ENCODE measurements at regions of chr6 and their contacts with region 1.

Region 1: DNA sequence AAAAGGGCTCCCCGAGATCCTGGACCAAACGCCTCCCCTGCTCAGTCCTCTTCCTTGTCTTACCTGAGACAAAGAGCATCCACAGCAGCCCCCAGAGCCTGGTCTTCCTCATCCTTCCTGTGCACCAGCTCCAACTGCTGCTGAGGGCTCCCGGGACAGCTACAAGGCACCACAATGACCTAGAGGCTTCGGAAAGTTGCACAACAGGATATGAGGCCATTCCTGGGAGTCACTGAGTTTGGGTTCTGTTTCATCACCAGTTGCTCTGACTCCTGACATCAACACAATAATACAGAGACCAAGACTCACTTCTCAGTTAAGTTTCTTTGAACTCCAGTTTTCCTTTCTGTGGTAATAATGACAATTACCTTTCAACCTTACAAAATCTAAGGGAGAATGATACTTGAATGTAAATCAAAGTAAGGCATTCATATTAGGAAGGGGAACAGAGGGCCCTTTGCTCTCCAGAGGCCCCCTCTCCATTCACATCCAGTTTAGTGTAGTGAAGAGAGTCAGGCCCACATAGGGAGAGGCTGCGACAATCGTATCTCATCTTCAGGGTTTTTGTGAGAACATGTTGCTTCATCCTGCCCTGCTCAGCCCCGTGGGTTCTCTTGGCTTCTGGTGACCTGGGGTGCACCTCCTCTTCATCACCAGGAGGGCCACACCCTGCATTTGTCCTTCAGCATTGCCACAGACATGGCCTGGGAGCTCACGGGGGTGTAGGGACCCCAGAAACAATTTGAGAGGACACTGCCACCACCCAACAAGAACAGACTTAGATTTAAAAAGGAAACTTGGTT is at the start of gene TREM1:
- DNase-seq: peak; percentile 97 to 99 (median 99)
- H3K4me3 ChIP-seq: peak within 1 kb of the TSS; percentile 37 to 77 (median 76)
- H3K4me3 Mint-ChIP-seq: peak within 1 kb of the TSS; percentile 91 to 98
- H3K27ac ChIP-seq: peak within 1 kb of the TSS; percentile 100
- H3K27ac Mint-ChIP-seq: peak within 1 kb of the TSS; percentile 100
- H3K4me1 ChIP-seq: peaks cover 83 to 84% of the 10 kb centered on the region in 2 donors
- H3K4me1 Mint-ChIP-seq: peaks cover 85% of the 10 kb centered on the region
- H3K27me3 ChIP-seq: no peaks in the 10 kb centered on the region
- H3K27me3 Mint-ChIP-seq: peaks cover 0 to 12% (median 0%) of the 10 kb centered on the region in 3 donors
- CTCF ChIP-seq: no peak
- polyA plus RNA-seq, gene TREM1: 175 to 303 (median 240) TPM

Region 2: DNA sequence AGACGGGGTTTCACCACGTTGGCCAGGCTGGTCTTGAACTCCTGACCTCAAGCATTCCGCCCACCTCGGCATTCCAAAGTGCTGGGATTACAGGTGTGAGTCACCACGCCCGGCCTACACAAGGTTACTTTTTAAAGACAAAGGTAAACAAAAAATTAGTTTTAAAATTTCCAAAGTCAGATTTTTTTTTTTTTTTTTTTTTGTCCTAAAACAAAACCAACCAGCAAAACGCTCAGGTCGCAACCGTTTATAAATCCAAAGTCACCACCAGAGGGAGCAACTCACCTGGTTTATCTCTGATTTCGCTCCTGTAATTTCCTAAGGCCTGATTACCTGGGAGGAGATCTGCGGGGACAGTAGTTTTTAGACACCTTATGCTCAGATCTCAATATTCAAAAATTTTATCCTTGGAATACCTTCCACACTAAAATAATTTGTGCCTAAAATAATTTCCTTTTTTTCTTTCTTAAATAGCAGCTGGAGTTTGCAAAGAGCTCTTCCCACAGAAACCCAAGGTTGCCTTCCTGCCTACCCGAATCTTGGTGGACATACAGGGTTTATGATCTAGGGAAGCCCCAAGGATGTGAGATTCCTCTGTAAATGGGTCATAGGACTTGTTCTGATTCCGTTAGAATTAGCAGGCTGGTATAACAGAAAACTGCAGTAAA is 19.6 kb after region 1 on chr6:
- intact Hi-C with region 1: loop called in 1 of 2 experiments (anchors 2 kb)
- DNase-seq: peak in 2 of 3 donors; percentile 58 to 71
- H3K4me3 ChIP-seq: no peak overlapping the region
- H3K4me3 Mint-ChIP-seq: no peak overlapping the region
- H3K27ac ChIP-seq: no peak overlapping the region
- H3K27ac Mint-ChIP-seq: peak overlapping the region in 1 of 7 donors; percentile 25
- H3K4me1 ChIP-seq: peaks cover 10 to 25% of the 10 kb centered on the region in 2 donors
- H3K4me1 Mint-ChIP-seq: peaks cover 21% of the 10 kb centered on the region
- H3K27me3 ChIP-seq: peaks cover 0 to 2% of the 10 kb centered on the region in 2 donors
- H3K27me3 Mint-ChIP-seq: peaks cover 0 to 5% (median 5%) of the 10 kb centered on the region in 3 donors
- CTCF ChIP-seq: peak; percentile 80

Region 3: GRCh38 chr6:41488433-41489119 is 201.8 kb after region 1 on chr6:
- intact Hi-C with region 1: no loop called
- DNase-seq: peak in 1 of 3 donors; percentile 8
- H3K4me3 ChIP-seq: no peak overlapping the region
- H3K4me3 Mint-ChIP-seq: no peak overlapping the region
- H3K27ac ChIP-seq: no peak overlapping the region
- H3K27ac Mint-ChIP-seq: no peak overlapping the region
- H3K4me1 ChIP-seq: no peaks in the 10 kb centered on the region
- H3K4me1 Mint-ChIP-seq: peaks cover 2% of the 10 kb centered on the region
- H3K27me3 ChIP-seq: peaks cover 0 to 11% of the 10 kb centered on the region in 2 donors
- H3K27me3 Mint-ChIP-seq: peaks cover 19 to 23% (median 22%) of the 10 kb centered on the region in 3 donors
- CTCF ChIP-seq: no peak